Heart right ventricle (tissue), 16 donors: ENCODE measurements at regions of chr11 and their contacts with region 1.

Region 1: DNA sequence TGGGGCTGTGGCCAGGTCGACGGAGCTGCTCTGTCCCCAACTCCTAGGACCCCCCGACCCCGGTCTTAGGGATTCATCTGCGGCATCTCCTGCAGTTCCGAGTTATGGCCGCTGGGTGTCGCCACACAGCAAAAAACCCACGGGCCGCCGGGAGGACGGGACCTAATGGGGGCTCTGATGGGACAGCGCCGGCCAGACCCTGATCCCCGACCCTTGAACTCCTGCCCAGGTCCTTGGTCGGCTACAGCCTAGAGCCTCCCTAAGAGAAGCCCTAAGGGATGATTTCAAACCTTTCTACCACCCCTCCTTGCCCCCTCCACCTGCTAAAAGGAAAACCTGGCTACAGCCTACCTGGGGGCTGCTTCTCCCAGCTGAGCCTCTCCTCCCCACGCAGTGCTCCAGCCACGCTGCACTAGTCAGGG is 30.8 kb upstream of the LRRC10B start:
- DNase-seq: peak; percentile 47 to 59
- ATAC-seq: peak; percentile 5 to 54 (median 42)
- H3K4me3 ChIP-seq: no peak overlapping the region
- H3K27ac ChIP-seq: peak overlapping the region in 5 of 10 donors; percentile 19 to 61 (median 44)
- H3K4me1 ChIP-seq: peaks cover 3 to 41% (median 17%) of the 10 kb centered on the region in 9 donors
- H3K27me3 ChIP-seq: no peaks in the 10 kb centered on the region
- CTCF ChIP-seq: peak; percentile 91 to 97 (median 94)

Region 2: GRCh38 chr11:61509043-61510029 is 31.6 kb after region 1 on chr11:
- intact Hi-C with region 1: loop called in 1 of 10 experiments (anchors 5 kb)
- DNase-seq: peak; percentile 38 to 76
- ATAC-seq: peak; percentile 71 to 87 (median 80)
- H3K4me3 ChIP-seq: peak overlapping the region in 9 of 10 donors; percentile 10 to 49 (median 40)
- H3K27ac ChIP-seq: peak overlapping the region; percentile 10 to 78 (median 56)
- H3K4me1 ChIP-seq: peaks cover 0 to 24% (median 17%) of the 10 kb centered on the region in 9 donors
- H3K27me3 ChIP-seq: peaks cover 13 to 78% (median 62%) of the 10 kb centered on the region in 7 donors
- CTCF ChIP-seq: peak; percentile 34 to 77 (median 58)

Region 3: GRCh38 chr11:61516675-61517572 is 39.2 kb after region 1 on chr11:
- intact Hi-C with region 1: loop called (anchors 1 to 5 kb)
- DNase-seq: no peak
- ATAC-seq: peak; percentile 21 to 53 (median 31)
- H3K4me3 ChIP-seq: peak overlapping the region in 2 of 10 donors; percentile 11 to 24
- H3K27ac ChIP-seq: peak overlapping the region in 2 of 10 donors; percentile 15 to 56
- H3K4me1 ChIP-seq: peaks cover 0 to 9% (median 8%) of the 10 kb centered on the region in 9 donors
- H3K27me3 ChIP-seq: peaks cover 0 to 11% (median 7%) of the 10 kb centered on the region in 7 donors
- CTCF ChIP-seq: peak; percentile 93 to 98 (median 96)

Region 4: GRCh38 chr11:61627567-61628445 is 150.1 kb after region 1 on chr11:
- intact Hi-C with region 1: loop called in 6 of 10 experiments (anchors 2 to 10 kb)
- DNase-seq: peak; percentile 74 to 77
- ATAC-seq: peak; percentile 71 to 93 (median 83)
- H3K4me3 ChIP-seq: no peak overlapping the region
- H3K27ac ChIP-seq: peak overlapping the region in 5 of 10 donors; percentile 7 to 90 (median 88)
- H3K4me1 ChIP-seq: peaks cover 0 to 27% (median 16%) of the 10 kb centered on the region in 9 donors
- H3K27me3 ChIP-seq: no peaks in the 10 kb centered on the region
- CTCF ChIP-seq: peak; percentile 61 to 93 (median 86)

Region 5: DNA sequence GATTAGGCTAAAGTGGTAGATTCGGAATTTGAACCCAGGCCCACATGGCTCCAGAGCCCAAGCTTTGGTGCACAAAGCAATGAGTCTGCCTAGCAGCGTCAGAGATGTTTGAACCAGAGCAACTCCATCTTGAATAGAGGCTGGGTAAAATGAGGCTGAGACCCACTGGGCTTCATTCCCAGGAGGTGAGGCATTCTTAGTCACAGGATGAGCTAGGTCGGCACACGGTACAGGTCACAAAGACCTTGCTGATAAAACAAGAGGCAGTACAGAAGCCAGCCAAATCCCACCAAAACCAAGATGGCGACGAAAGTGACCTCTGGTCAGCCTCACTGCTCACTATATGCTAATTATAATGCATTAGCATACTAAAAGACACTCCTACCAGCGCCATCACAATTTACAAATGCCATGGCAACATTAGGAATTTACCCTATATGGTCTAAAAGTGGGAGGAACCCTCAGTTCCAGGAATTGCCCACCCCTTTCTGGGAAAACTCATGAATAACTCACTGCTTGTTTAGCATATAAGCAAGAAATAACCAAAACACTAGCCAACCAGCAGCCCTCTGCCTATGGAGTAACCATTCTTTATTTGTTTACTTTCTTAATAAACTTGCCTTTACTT is 162.2 kb after region 1 on chr11:
- intact Hi-C with region 1: loop called in 8 of 10 experiments (anchors 1 to 10 kb)
- DNase-seq: no peak
- ATAC-seq: no peak
- H3K4me3 ChIP-seq: no peak overlapping the region
- H3K27ac ChIP-seq: no peak overlapping the region
- H3K4me1 ChIP-seq: no peaks in the 10 kb centered on the region
- H3K27me3 ChIP-seq: peaks cover 0 to 10% (median 0%) of the 10 kb centered on the region in 7 donors
- CTCF ChIP-seq: no peak

Region 6: GRCh38 chr11:61733120-61733978 is 255.6 kb after region 1 on chr11:
- intact Hi-C with region 1: loop called in 1 of 10 experiments (anchors 5 kb)
- DNase-seq: peak; percentile 84 to 88
- ATAC-seq: peak; percentile 71 to 94 (median 88)
- H3K4me3 ChIP-seq: no peak overlapping the region
- H3K27ac ChIP-seq: peak overlapping the region in 5 of 10 donors; percentile 0 to 50 (median 16)
- H3K4me1 ChIP-seq: peaks cover 0 to 27% (median 7%) of the 10 kb centered on the region in 9 donors
- H3K27me3 ChIP-seq: no peaks in the 10 kb centered on the region
- CTCF ChIP-seq: peak; percentile 98 to 100 (median 99)